ENCODE measurements at regions of chr4 and their contacts with region 1.

Region 1: GRCh38 chr4:21102667-21103066 is 402.4 kb downstream of the PACRGL start:
- DNase-seq: peak in 2 of 9 experiments; percentile 3 to 15
- ATAC-seq: no peak
- H3K4me3 ChIP-seq: no peak overlapping the region
- H3K4me3 Mint-ChIP-seq: no peak overlapping the region
- H3K27ac ChIP-seq: no peak overlapping the region
- H3K27ac Mint-ChIP-seq: no peak overlapping the region
- H3K4me1 ChIP-seq: no peaks in the 10 kb centered on the region
- H3K4me1 Mint-ChIP-seq: peaks cover 4% of the 10 kb centered on the region
- H3K27me3 ChIP-seq: no peaks in the 10 kb centered on the region
- H3K27me3 Mint-ChIP-seq: no peaks in the 10 kb centered on the region
- CTCF ChIP-seq: no peak

Region 2: DNA sequence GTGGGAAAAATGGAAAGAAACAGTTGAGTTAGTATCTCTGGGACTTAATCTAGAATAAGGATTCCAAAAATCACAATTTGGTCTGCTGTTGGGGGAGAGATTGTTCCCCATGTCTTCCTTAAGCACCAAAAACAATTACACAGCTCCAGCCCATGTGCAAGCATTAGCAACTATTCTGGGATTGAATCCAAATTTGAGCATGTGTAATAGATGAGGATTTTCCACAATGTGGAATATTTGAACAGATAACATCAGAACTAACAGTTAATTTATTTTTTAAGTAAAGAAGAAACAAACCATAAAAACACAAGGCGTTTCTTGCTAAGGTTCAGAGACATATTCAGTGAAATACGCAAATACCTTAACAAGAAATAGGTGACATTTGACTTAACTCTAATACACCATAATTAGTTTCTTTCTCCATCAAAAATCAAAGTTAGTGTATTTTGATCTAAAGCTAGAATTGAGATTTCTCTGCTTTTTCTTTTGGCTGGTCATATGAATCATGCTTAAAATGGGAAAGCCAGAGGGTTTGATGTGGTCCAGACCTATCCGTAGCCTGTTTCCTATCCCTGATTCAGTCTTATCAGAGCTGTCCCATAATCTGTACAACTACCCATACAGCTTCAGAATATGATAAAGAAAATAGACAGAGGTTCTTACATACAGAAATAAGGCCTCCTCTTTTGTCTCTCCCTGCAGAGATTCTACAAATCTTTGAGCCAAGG is 11.0 kb after region 1 on chr4:
- CTCF ChIA-PET with region 1: no interaction called
- POLR2A ChIA-PET with region 1: no interaction called
- intact Hi-C with region 1: no loop called
- DNase-seq: no peak
- ATAC-seq: no peak
- H3K4me3 ChIP-seq: no peak overlapping the region
- H3K4me3 Mint-ChIP-seq: no peak overlapping the region
- H3K27ac ChIP-seq: no peak overlapping the region
- H3K27ac Mint-ChIP-seq: no peak overlapping the region
- H3K4me1 ChIP-seq: no peaks in the 10 kb centered on the region
- H3K4me1 Mint-ChIP-seq: no peaks in the 10 kb centered on the region
- H3K27me3 ChIP-seq: no peaks in the 10 kb centered on the region
- H3K27me3 Mint-ChIP-seq: no peaks in the 10 kb centered on the region
- CTCF ChIP-seq: no peak

Region 3: GRCh38 chr4:21134994-21135393 is 32.3 kb after region 1 on chr4:
- CTCF ChIA-PET with region 1: no interaction called
- POLR2A ChIA-PET with region 1: no interaction called
- intact Hi-C with region 1: loop called in 1 of 2 experiments (anchors 2 kb)
- DNase-seq: peak in 2 of 9 experiments; percentile 33 to 44
- ATAC-seq: no peak
- H3K4me3 ChIP-seq: no peak overlapping the region
- H3K4me3 Mint-ChIP-seq: no peak overlapping the region
- H3K27ac ChIP-seq: no peak overlapping the region
- H3K27ac Mint-ChIP-seq: no peak overlapping the region
- H3K4me1 ChIP-seq: no peaks in the 10 kb centered on the region
- H3K4me1 Mint-ChIP-seq: no peaks in the 10 kb centered on the region
- H3K27me3 ChIP-seq: no peaks in the 10 kb centered on the region
- H3K27me3 Mint-ChIP-seq: no peaks in the 10 kb centered on the region
- CTCF ChIP-seq: no peak

Region 4: GRCh38 chr4:21290562-21290961 is 187.9 kb after region 1 on chr4:
- CTCF ChIA-PET with region 1: no interaction called
- POLR2A ChIA-PET with region 1: no interaction called
- intact Hi-C with region 1: no loop called
- DNase-seq: no peak
- ATAC-seq: no peak
- H3K4me3 ChIP-seq: no peak overlapping the region
- H3K4me3 Mint-ChIP-seq: no peak overlapping the region
- H3K27ac ChIP-seq: no peak overlapping the region
- H3K27ac Mint-ChIP-seq: no peak overlapping the region
- H3K4me1 ChIP-seq: no peaks in the 10 kb centered on the region
- H3K4me1 Mint-ChIP-seq: no peaks in the 10 kb centered on the region
- H3K27me3 ChIP-seq: no peaks in the 10 kb centered on the region
- H3K27me3 Mint-ChIP-seq: no peaks in the 10 kb centered on the region
- CTCF ChIP-seq: no peak

Region 5: DNA sequence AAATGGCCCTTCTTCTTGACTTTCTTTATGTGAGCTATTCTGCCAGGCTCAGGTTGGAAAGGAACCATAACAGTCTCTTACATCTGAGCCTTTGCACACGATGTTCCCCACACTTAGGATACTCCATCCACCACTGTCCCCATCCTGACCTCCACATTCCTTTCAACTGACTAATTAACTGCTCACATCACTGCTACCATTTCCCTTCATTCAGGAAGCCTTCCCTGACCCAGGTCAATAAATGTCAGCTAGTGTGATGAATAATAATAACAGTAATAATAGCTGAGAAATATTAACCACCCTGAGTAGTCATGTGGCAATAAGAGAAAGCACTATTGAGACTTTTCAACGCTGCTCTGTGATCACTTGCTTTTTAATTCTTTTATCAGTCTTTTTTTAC is 554.2 kb after region 1 on chr4:
- CTCF ChIA-PET with region 1: no interaction called
- POLR2A ChIA-PET with region 1: no interaction called
- intact Hi-C with region 1: no loop called
- DNase-seq: no peak
- ATAC-seq: no peak
- H3K4me3 ChIP-seq: no peak overlapping the region
- H3K4me3 Mint-ChIP-seq: no peak overlapping the region
- H3K27ac ChIP-seq: no peak overlapping the region
- H3K27ac Mint-ChIP-seq: no peak overlapping the region
- H3K4me1 ChIP-seq: no peaks in the 10 kb centered on the region
- H3K4me1 Mint-ChIP-seq: no peaks in the 10 kb centered on the region
- H3K27me3 ChIP-seq: no peaks in the 10 kb centered on the region
- H3K27me3 Mint-ChIP-seq: no peaks in the 10 kb centered on the region
- CTCF ChIP-seq: no peak

Measured in CD8-positive, alpha-beta T cell (primary cell).